ENCODE measurements at regions of chr20 and their contacts with region 1.

Region 1: GRCh38 chr20:64038565-64039292 is 2.7 kb downstream of the C20orf204 start:
- DNase-seq: no peak
- ATAC-seq: peak; percentile 68
- H3K4me3 ChIP-seq: peak overlapping the region; percentile 58
- H3K27ac ChIP-seq: peak overlapping the region; percentile 69
- H3K4me1 ChIP-seq: peaks cover 51% of the 10 kb centered on the region
- H3K27me3 ChIP-seq: no peaks in the 10 kb centered on the region
- CTCF ChIP-seq: peak; percentile 65 to 85 (median 82)
- EP300 ChIP-seq: no peak
- POLR2A ChIP-seq: peak; percentile 61
- RAD21 ChIP-seq: peak; percentile 72

Region 2: GRCh38 chr20:63955827-63956663 is 82.7 kb before region 1 on chr20 and contains the start of gene UCKL1:
- CTCF ChIA-PET with region 1: no interaction called
- POLR2A ChIA-PET with region 1: no interaction called
- RAD21 ChIA-PET with region 1: interaction called, 10 read pairs
- SMC1A ChIA-PET with region 1: no interaction called
- in situ Hi-C with region 1: no loop called
- intact Hi-C with region 1: no loop called
- DNase-seq: no peak
- ATAC-seq: peak; percentile 87
- H3K4me3 ChIP-seq: peak within 1 kb of the TSS; percentile 81
- H3K27ac ChIP-seq: peak within 1 kb of the TSS; percentile 83
- H3K4me1 ChIP-seq: peaks cover 10% of the 10 kb centered on the region
- H3K27me3 ChIP-seq: no peaks in the 10 kb centered on the region
- CTCF ChIP-seq: no peak; a peak in 1 of 6 replicates
- EP300 ChIP-seq: no peak
- POLR2A ChIP-seq: peak; percentile 91
- RAD21 ChIP-seq: no peak
- polyA plus RNA-seq, gene UCKL1: 2.4 to 7.9 TPM

Region 3: GRCh38 chr20:63980806-63981728 is 57.7 kb before region 1 on chr20 and contains the start of gene PRPF6:
- CTCF ChIA-PET with region 1: interaction called, 67 read pairs
- POLR2A ChIA-PET with region 1: interaction called, 63 read pairs
- RAD21 ChIA-PET with region 1: interaction called, 92 read pairs
- SMC1A ChIA-PET with region 1: interaction called, 52 read pairs
- in situ Hi-C with region 1: no loop called
- intact Hi-C with region 1: loop called (anchors 1 kb)
- DNase-seq: peak; percentile 83
- ATAC-seq: peak; percentile 68
- H3K4me3 ChIP-seq: peak within 1 kb of the TSS; percentile 96
- H3K27ac ChIP-seq: peak within 1 kb of the TSS; percentile 92
- H3K4me1 ChIP-seq: peaks cover 23% of the 10 kb centered on the region
- H3K27me3 ChIP-seq: no peaks in the 10 kb centered on the region
- CTCF ChIP-seq: peak; percentile 83 to 97 (median 88)
- EP300 ChIP-seq: no peak
- POLR2A ChIP-seq: peak; percentile 89
- RAD21 ChIP-seq: peak; percentile 57
- polyA plus RNA-seq, gene PRPF6: 5.0 to 10.7 TPM

Region 4: DNA sequence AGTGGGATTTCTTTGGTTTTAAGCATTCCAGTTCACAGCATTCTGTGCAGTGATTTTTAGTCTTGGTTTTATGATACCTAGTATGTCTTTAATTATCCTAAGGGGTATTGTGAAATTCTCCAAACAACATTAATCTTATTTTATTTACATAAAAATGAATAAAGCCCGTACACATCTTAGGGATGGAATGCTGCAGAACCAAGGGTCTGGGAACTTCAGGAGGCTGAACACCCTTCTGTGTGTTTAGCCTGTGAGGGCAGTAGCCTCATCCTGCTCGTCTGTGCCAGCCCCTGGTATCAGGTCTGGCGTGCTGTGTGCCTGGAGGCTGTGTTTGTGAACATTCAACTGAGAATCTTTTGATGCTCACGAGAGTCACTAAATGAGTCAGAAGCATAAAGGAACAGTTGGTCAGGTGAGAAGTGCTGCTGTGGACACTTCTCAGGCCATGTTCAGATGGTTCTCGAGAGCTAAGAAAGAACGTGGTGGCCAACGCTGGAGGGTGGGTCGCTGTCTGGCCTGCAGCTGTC is 28.0 kb before region 1 on chr20:
- CTCF ChIA-PET with region 1: interaction called, 4 read pairs
- POLR2A ChIA-PET with region 1: interaction called, 3 read pairs
- RAD21 ChIA-PET with region 1: interaction called, 6 read pairs
- SMC1A ChIA-PET with region 1: interaction called, 9 read pairs
- in situ Hi-C with region 1: no loop called
- intact Hi-C with region 1: loop called (anchors 2 kb)
- DNase-seq: peak; percentile 31
- ATAC-seq: peak; percentile 76
- H3K4me3 ChIP-seq: no peak overlapping the region
- H3K27ac ChIP-seq: peak overlapping the region; percentile 94
- H3K4me1 ChIP-seq: peaks cover 27% of the 10 kb centered on the region
- H3K27me3 ChIP-seq: no peaks in the 10 kb centered on the region
- CTCF ChIP-seq: no peak
- EP300 ChIP-seq: 0 out of 4 replicates have a peak, but pooled peaks of 1 of the 2 experiments have one; percentile 42
- POLR2A ChIP-seq: no peak
- RAD21 ChIP-seq: no peak

Region 5: GRCh38 chr20:64079273-64080012 is 40.7 kb after region 1 on chr20 and contains the start of gene RGS19:
- CTCF ChIA-PET with region 1: interaction called, 22 read pairs
- POLR2A ChIA-PET with region 1: interaction called, 10 read pairs
- RAD21 ChIA-PET with region 1: interaction called, 5 read pairs
- SMC1A ChIA-PET with region 1: interaction called, 7 read pairs
- in situ Hi-C with region 1: no loop called
- intact Hi-C with region 1: no loop called
- DNase-seq: no peak
- ATAC-seq: peak; percentile 45
- H3K4me3 ChIP-seq: peak within 1 kb of the TSS; percentile 83
- H3K27ac ChIP-seq: peak within 1 kb of the TSS; percentile 85
- H3K4me1 ChIP-seq: peaks cover 26% of the 10 kb centered on the region
- H3K27me3 ChIP-seq: peaks cover 2 to 4% of the 10 kb centered on the region in 2 experiments; a peak in 2 of 4 replicates
- CTCF ChIP-seq: no peak
- EP300 ChIP-seq: no peak
- POLR2A ChIP-seq: peak; percentile 67
- RAD21 ChIP-seq: no peak
- polyA plus RNA-seq, gene RGS19: 0.82 to 3.3 TPM

Measured in GM12878 (cell line).